Activated CD4-positive, alpha-beta memory T cell treated with anti-CD3 and anti-CD28 coated beads for 36 hours (primary cell): ENCODE measurements at regions of chr18 and their contacts with region 1.

Region 1: GRCh38 chr18:47260120-47260923 is 8.9 kb upstream of the SKOR2 start:
- DNase-seq: peak; percentile 58
- H3K4me3 Mint-ChIP-seq: no peak overlapping the region
- H3K27ac Mint-ChIP-seq: no peak overlapping the region
- H3K4me1 Mint-ChIP-seq: no peaks in the 10 kb centered on the region
- H3K27me3 Mint-ChIP-seq: peaks cover 83% of the 10 kb centered on the region

Region 2: DNA sequence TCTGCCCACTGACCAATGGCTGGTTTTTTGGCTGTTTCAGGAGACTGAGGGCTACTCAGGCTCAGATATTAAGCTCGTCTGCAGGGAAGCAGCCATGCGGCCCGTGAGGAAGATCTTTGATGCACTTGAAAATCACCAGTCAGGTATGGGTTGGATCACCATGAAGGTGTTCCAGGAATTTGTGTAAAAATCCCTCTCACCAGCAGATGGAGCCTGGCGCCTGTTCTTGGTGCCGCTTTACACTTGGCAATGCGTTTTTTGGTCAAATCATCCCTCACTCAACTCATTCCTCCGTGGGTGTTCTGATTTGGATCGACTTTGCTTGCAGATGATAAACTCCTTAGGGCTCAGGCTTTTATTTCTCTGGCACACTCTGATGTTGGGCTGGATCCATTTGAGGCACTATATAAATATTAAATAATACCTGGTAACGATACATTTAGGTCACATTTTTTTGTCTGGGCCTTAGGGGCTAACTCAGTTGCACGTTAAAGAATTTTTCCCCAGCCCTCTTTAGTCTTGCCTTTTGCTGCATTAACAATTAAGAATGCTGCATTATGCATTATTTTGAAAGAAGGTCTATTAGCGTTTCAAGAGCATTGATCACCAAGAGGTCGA is 160.0 kb before region 1 on chr18:
- CTCF ChIA-PET with region 1: no interaction called
- POLR2A ChIA-PET with region 1: no interaction called
- intact Hi-C with region 1: loop called (anchors 10 kb)
- DNase-seq: peak; percentile 75
- H3K4me3 Mint-ChIP-seq: no peak overlapping the region
- H3K27ac Mint-ChIP-seq: no peak overlapping the region
- H3K4me1 Mint-ChIP-seq: no peaks in the 10 kb centered on the region
- H3K27me3 Mint-ChIP-seq: no peaks in the 10 kb centered on the region